ENCODE measurements at regions of chr13 and their contacts with region 1.

Region 1: GRCh38 chr13:49300739-49301589 is 53.2 kb downstream of the CDADC1 start:
- DNase-seq: peak; percentile 69 to 77 (median 70)
- ATAC-seq: peak; percentile 93
- H3K4me3 ChIP-seq: no peak overlapping the region
- H3K27ac ChIP-seq: no peak overlapping the region
- H3K4me1 ChIP-seq: peaks cover 2 to 4% of the 10 kb centered on the region in 2 experiments; a peak in 3 of 5 replicates
- H3K27me3 ChIP-seq: no peaks in the 10 kb centered on the region
- CTCF ChIP-seq: peak; percentile 70 to 87 (median 82)
- EP300 ChIP-seq: no peak
- POLR2A ChIP-seq: no peak
- RAD21 ChIP-seq: peak; percentile 88 to 94

Region 2: GRCh38 chr13:49367640-49368422 is 66.9 kb after region 1 on chr13:
- CTCF ChIA-PET with region 1: no interaction called
- POLR2A ChIA-PET with region 1: no interaction called
- in situ Hi-C with region 1: no loop called
- intact Hi-C with region 1: no loop called
- DNase-seq: no peak
- ATAC-seq: no peak
- H3K4me3 ChIP-seq: no peak overlapping the region
- H3K27ac ChIP-seq: no peak overlapping the region
- H3K4me1 ChIP-seq: no peaks in the 10 kb centered on the region; a peak in 1 of 5 replicates
- H3K27me3 ChIP-seq: no peaks in the 10 kb centered on the region
- CTCF ChIP-seq: no peak
- EP300 ChIP-seq: no peak
- POLR2A ChIP-seq: no peak
- RAD21 ChIP-seq: no peak

Region 3: GRCh38 chr13:49421391-49421790 is 120.4 kb after region 1 on chr13:
- CTCF ChIA-PET with region 1: no interaction called
- POLR2A ChIA-PET with region 1: no interaction called
- in situ Hi-C with region 1: no loop called
- intact Hi-C with region 1: loop called (anchors 5 kb)
- DNase-seq: peak; percentile 7 to 55 (median 24)
- ATAC-seq: peak; percentile 96
- H3K4me3 ChIP-seq: no peak overlapping the region
- H3K27ac ChIP-seq: no peak overlapping the region
- H3K4me1 ChIP-seq: no peaks in the 10 kb centered on the region
- H3K27me3 ChIP-seq: no peaks in the 10 kb centered on the region
- CTCF ChIP-seq: peak; percentile 33 to 47 (median 38); a peak in 3 of 6 replicates
- EP300 ChIP-seq: no peak
- POLR2A ChIP-seq: no peak
- RAD21 ChIP-seq: peak in 1 of 2 experiments; percentile 58; a peak in 2 of 4 replicates

Region 4: GRCh38 chr13:49436890-49437289 is 135.9 kb after region 1 on chr13:
- CTCF ChIA-PET with region 1: interaction called, 17 read pairs
- POLR2A ChIA-PET with region 1: no interaction called
- in situ Hi-C with region 1: loop called (anchors 10 kb)
- intact Hi-C with region 1: loop called (anchors 1 kb)
- DNase-seq: no peak
- ATAC-seq: no peak; the same call in 2 of the 3 replicates
- H3K4me3 ChIP-seq: no peak overlapping the region
- H3K27ac ChIP-seq: no peak overlapping the region
- H3K4me1 ChIP-seq: no peaks in the 10 kb centered on the region; a peak in 1 of 5 replicates
- H3K27me3 ChIP-seq: no peaks in the 10 kb centered on the region
- CTCF ChIP-seq: peak in 1 of 3 experiments; percentile 17; a peak in 2 of 6 replicates
- EP300 ChIP-seq: no peak
- POLR2A ChIP-seq: no peak
- RAD21 ChIP-seq: peak; percentile 28 to 29; a peak in 2 of 4 replicates

Region 5: GRCh38 chr13:49517461-49517860 is 216.5 kb after region 1 on chr13:
- CTCF ChIA-PET with region 1: no interaction called
- POLR2A ChIA-PET with region 1: no interaction called
- in situ Hi-C with region 1: no loop called
- intact Hi-C with region 1: loop called (anchors 2 kb)
- DNase-seq: no peak
- ATAC-seq: no peak
- H3K4me3 ChIP-seq: no peak overlapping the region
- H3K27ac ChIP-seq: no peak overlapping the region
- H3K4me1 ChIP-seq: no peaks in the 10 kb centered on the region
- H3K27me3 ChIP-seq: no peaks in the 10 kb centered on the region
- CTCF ChIP-seq: peak in 2 of 3 experiments; percentile 27 to 38; a peak in 2 of 6 replicates
- EP300 ChIP-seq: no peak
- POLR2A ChIP-seq: no peak
- RAD21 ChIP-seq: no peak

Measured in K562 (cell line).